Ascending aorta (tissue), 2 donors: ENCODE measurements at regions of chr10 and their contacts with region 1.

Region 1: GRCh38 chr10:93199191-93199751 is 125.6 kb downstream of the CYP26A1 start:
- DNase-seq: peak; percentile 41 to 77
- H3K4me3 ChIP-seq: peak overlapping the region; percentile 50 to 63
- H3K27ac ChIP-seq: peak overlapping the region; percentile 10 to 42
- H3K4me1 ChIP-seq: peaks cover 0 to 4% of the 10 kb centered on the region in 2 donors
- H3K27me3 ChIP-seq: no peaks in the 10 kb centered on the region
- CTCF ChIP-seq: no peak

Region 2: DNA sequence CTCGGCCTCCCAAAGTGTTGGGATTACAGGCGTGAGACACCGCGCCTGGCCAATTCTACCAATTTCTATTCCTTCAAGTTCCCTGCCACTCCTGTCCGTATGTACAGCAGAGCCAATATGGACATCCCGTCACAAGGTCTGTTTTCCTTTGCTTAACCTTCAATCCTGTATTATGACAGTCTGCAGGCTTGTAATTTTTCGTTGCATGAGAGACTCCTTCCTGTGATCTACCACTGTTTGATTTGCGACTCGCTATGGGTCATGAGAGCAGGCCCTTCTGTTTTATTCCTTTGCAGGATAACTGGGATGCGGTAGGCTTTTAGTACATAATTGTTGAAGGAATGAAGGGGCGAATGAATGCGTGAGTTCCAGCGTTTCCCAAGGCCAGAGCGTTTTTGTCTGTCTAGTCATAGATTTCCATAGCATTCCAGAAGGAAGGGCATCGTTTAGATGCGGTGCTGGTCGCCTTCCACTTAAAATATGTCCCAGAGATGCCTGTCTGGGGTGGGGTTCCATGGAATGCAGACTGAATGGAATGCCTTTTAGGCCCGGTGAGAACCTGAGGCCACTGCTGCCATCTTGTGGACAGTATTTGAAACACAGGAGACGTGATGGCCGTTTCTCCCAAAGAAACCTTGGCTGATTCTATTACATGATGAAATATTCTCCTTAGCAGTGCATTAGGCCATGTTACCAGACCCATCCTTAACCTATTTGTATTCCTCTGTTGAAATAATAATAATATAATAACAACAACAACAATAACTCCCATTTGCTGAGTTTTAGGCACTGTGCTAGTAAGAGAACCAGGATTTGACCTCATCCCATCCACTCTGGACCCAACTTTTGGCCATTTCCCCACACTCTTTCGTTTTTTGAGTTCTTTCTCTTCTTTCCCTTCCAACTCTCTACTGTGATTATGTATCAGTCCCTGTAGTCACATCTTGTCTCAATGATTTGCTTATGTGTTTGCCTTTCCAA is 89.7 kb after region 1 on chr10:
- intact Hi-C with region 1: loop called (anchors 5 kb)
- DNase-seq: peak in 1 of 2 donors; percentile 87
- H3K4me3 ChIP-seq: no peak overlapping the region
- H3K27ac ChIP-seq: peak overlapping the region in 1 of 2 donors; percentile 14
- H3K4me1 ChIP-seq: peaks cover 0 to 4% of the 10 kb centered on the region in 2 donors
- H3K27me3 ChIP-seq: no peaks in the 10 kb centered on the region
- CTCF ChIP-seq: peak; percentile 65 to 83 (median 67)